ENCODE measurements at regions of chr1 and their contacts with region 1.

Region 1: GRCh38 chr1:18693256-18694098 is 62.8 kb downstream of the PAX7 start:
- DNase-seq: no peak
- H3K4me3 ChIP-seq: no peak overlapping the region
- H3K27ac ChIP-seq: no peak overlapping the region
- H3K27me3 ChIP-seq: peaks cover 0 to 61% (median 15%) of the 10 kb centered on the region in 45 donors
- CTCF ChIP-seq: no peak

Region 2: DNA sequence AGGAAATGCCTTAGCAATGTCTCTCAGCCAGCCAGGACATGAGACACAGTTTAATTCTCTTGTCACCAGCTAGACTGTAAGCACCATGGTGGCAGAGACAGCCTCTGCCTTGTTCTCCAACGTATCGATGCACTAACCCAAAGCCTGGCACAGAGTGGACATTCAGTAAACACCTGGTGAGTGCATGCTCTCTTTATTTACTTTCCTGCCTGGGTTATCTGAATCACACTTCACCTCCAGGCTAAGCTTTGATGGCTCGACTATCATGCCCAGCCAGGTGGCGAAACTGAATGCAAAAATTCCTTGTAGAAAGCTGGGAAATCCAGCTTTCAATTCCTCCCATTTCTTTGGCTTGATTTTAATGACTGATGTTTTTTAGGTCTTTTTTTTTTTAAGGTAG is 730.5 kb before region 1 on chr1:
- intact Hi-C with region 1: loop called in 1 of 2 experiments (anchors 5 kb)
- DNase-seq: no peak
- H3K4me3 ChIP-seq: no peak overlapping the region
- H3K27ac ChIP-seq: no peak overlapping the region
- H3K27me3 ChIP-seq: peaks cover 0 to 15% (median 0%) of the 10 kb centered on the region in 45 donors
- CTCF ChIP-seq: no peak

Region 3: DNA sequence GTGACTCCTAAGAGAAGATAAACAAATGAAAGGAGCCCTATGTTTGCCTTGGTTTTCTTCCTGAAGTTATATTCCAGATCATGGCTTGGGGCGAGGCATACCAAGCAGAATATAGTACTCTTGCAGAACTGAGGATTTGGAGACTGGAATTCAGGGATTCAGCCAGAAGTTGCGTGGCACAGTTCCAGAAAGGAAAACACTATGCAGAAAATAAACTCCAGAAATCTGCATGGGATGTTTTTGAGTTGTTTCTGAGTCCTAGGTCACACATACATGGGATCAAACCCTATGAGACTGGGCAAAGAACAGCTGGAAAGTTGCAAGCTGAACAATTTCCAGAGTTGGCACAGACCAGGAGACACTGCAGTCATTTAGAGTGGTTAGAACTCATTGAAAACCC is 305.9 kb after region 1 on chr1:
- intact Hi-C with region 1: no loop called
- DNase-seq: no peak
- H3K4me3 ChIP-seq: no peak overlapping the region
- H3K27ac ChIP-seq: no peak overlapping the region
- H3K27me3 ChIP-seq: no peaks in the 10 kb centered on the region
- CTCF ChIP-seq: no peak